AG04449 (cell line): ENCODE measurements at regions of chr1 and their contacts with region 1.

Region 1: GRCh38 chr1:75233302-75233929 is 99.2 kb downstream of the LHX8 start:
- DNase-seq: no peak
- H3K4me3 ChIP-seq: no peak overlapping the region
- CTCF ChIP-seq: peak; percentile 57

Region 2: DNA sequence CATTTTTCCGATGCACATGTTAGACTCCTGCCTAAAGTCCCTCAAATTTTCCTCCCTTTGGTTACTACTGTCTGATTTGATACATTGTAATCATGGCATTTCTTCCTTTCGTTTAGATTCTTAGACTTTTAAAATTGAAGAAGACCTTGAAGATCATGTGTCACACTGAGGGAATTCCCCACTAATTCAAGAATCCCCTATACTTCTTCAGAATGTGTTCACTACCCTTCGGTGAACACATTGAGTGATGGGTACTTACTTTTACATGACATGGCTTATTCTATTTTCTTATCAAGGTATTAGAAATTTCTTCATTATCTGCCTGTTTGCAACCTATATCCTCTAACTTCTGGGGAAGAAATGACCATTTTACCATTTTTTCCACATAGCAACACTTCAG is 13.3 kb before region 1 on chr1:
- CTCF ChIA-PET with region 1: interaction called, 10 read pairs
- POLR2A ChIA-PET with region 1: no interaction called
- DNase-seq: no peak
- H3K4me3 ChIP-seq: no peak overlapping the region
- CTCF ChIP-seq: no peak

Region 3: GRCh38 chr1:75426688-75427087 is 193.3 kb after region 1 on chr1:
- CTCF ChIA-PET with region 1: no interaction called
- POLR2A ChIA-PET with region 1: no interaction called
- DNase-seq: no peak
- H3K4me3 ChIP-seq: no peak overlapping the region
- CTCF ChIP-seq: no peak